Posterior cingulate gyrus (tissue), 11 donors: ENCODE measurements at regions of chr17 and their contacts with region 1.

Region 1: DNA sequence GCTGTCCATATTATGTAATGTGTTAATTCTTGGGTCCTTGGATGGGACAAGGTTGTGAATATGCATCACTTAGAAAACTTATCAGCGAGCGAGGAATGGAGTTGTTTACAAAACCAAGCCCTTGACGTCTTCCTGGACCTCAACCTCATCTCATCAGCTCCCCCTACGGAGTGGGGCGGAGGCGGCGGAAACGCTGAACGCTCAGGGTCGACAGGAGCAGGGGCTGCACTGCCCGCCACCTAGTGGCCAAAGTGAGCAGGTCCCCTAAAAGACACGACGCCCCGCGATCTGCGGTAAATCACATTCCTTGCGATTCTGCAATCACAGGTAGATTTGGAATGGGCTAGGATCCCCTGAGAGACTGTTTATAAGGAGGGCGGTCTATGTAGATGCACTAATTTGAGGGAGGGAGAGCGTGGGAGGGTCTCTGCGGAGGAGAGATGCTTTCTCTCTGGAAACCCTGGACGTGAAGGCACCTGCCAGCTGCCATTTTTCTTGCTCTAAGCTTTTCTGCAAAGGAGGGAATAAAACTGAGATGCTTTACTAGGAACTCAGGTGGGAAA is 5.4 kb upstream of the ICAM2 start:
- DNase-seq: peak in 8 of 10 donors; percentile 24 to 86 (median 44)

Region 2: DNA sequence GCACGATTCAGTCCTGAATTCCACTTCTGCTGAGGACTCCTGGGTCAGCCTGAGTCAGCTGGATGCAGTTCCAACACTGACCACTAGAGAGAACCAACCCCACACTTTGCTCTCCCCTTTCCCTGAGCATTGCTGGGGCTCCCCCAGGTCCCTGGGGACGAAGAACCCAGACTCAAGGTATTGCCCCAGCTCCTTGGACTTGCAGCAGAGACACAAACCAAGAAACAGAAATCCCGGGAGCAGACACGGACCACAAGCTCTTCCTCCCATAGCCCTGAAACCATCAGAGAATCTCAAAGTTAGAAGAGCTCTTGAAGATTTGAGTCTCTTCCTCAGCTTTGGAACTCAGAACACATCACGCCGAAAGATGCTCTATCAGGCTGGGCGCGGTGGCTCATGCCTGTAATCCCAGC is 106.5 kb before region 1 on chr17:
- intact Hi-C with region 1: loop called (anchors 5 kb)
- DNase-seq: peak in 7 of 10 donors; percentile 18 to 82 (median 44)